Cardiac septum (tissue), 1 donor: ENCODE measurements at regions of chr2 and their contacts with region 1.

Region 1: GRCh38 chr2:119702918-119703401 is 24.0 kb downstream of the TMEM177 start:
- DNase-seq: peak; percentile 90

Region 2: GRCh38 chr2:119531292-119531691 is 171.7 kb before region 1 on chr2:
- intact Hi-C with region 1: no loop called
- DNase-seq: no peak

Region 3: DNA sequence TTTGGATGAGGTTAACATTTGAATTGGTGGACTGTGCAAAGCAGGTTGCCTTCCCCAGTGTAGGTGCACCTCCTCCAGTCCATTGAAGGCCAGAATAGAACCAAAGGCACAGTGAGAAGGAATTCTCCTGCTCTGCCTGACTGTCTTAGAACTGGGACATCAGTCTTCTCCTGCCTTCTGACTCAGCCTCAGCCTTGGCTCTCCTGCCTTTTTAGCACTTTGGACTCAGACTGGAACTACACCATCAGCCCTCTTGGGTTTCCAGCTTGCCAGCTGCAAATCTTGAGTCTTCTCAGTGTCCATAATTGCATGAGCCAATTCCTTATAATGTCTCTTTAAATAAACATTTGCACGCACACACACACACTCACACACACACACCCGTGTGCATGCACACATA is 31.9 kb before region 1 on chr2:
- intact Hi-C with region 1: no loop called
- DNase-seq: no peak

Region 4: GRCh38 chr2:119746836-119747686 is 44.1 kb after region 1 on chr2:
- intact Hi-C with region 1: loop called (anchors 5 kb)
- DNase-seq: no peak

Region 5: DNA sequence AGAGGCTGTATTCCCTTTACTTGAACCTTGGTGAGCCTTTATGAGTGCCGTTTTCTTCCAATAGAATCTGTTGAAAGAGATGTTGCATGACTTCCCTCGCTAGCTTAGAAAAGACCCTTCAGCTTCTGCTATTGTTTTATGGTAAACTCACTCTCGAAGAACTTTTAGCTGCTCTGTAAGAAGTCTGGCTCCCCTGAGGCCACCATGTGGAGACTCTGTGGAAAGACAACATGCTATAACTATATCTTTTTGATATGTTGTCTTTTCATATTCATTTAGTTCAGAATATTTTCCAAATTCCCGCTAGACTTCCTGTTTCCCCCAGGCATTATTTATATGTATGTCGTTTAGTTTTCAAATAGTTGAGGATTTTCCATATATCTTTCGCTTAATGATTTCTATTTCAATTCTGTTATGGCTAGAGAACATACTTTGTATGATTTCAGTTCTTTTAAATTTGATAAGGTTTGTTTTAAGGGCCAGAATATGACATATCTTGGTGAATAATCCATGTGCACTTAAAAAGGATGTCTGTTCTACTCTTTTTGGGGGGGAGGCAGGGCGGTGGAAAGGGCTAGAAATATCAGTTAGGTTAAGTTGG is 120.9 kb after region 1 on chr2:
- intact Hi-C with region 1: loop called (anchors 5 kb)
- DNase-seq: no peak

Region 6: GRCh38 chr2:119901013-119901412 is 198.1 kb after region 1 on chr2:
- intact Hi-C with region 1: no loop called
- DNase-seq: no peak